ENCODE measurements at regions of chr3 and their contacts with region 1.

Region 1: GRCh38 chr3:39288300-39288808 is 8.5 kb upstream of the CX3CR1 start:
- DNase-seq: peak; percentile 89
- ATAC-seq: peak; percentile 93
- H3K4me3 ChIP-seq: no peak overlapping the region
- H3K27ac ChIP-seq: no peak overlapping the region
- H3K4me1 ChIP-seq: 0 out of 2 replicates have a peak, but pooled peaks cover 4% of the 10 kb centered on the region
- H3K27me3 ChIP-seq: no peaks in the 10 kb centered on the region
- CTCF ChIP-seq: peak; percentile 99

Region 2: GRCh38 chr3:39075910-39076309 is 212.4 kb before region 1 on chr3:
- CTCF ChIA-PET with region 1: no interaction called
- POLR2A ChIA-PET with region 1: no interaction called
- intact Hi-C with region 1: no loop called
- DNase-seq: no peak
- ATAC-seq: no peak
- H3K4me3 ChIP-seq: no peak overlapping the region
- H3K27ac ChIP-seq: no peak overlapping the region
- H3K4me1 ChIP-seq: no peaks in the 10 kb centered on the region
- H3K27me3 ChIP-seq: no peaks in the 10 kb centered on the region
- CTCF ChIP-seq: no peak

Region 3: GRCh38 chr3:39101022-39101689 is 187.2 kb before region 1 on chr3:
- CTCF ChIA-PET with region 1: interaction called, 6 read pairs
- POLR2A ChIA-PET with region 1: no interaction called
- intact Hi-C with region 1: loop called (anchors 1 kb)
- DNase-seq: peak; percentile 58
- ATAC-seq: peak; percentile 78
- H3K4me3 ChIP-seq: no peak overlapping the region
- H3K27ac ChIP-seq: no peak overlapping the region
- H3K4me1 ChIP-seq: peaks cover 12% of the 10 kb centered on the region
- H3K27me3 ChIP-seq: no peaks in the 10 kb centered on the region
- CTCF ChIP-seq: peak; percentile 93

Region 4: DNA sequence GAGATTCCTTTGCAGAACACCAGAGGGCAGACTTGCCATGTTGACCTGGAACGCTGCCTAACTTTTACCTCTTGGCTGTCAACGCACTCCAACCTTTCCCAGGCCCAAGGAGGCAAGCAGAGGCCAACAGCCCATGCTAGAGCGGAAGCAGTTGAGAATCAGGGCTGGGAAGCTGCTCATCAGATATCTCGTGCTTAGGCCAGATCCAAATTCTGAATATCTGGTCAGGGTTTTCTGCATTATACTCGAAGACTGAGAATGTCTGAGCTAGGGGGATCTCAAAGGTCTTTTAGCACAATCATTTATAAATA is 98.4 kb before region 1 on chr3:
- CTCF ChIA-PET with region 1: interaction called, 46 read pairs
- POLR2A ChIA-PET with region 1: no interaction called
- intact Hi-C with region 1: loop called (anchors 1 kb)
- DNase-seq: peak; percentile 79
- ATAC-seq: peak; percentile 82
- H3K4me3 ChIP-seq: no peak overlapping the region
- H3K27ac ChIP-seq: no peak overlapping the region
- H3K4me1 ChIP-seq: no peaks in the 10 kb centered on the region
- H3K27me3 ChIP-seq: no peaks in the 10 kb centered on the region
- CTCF ChIP-seq: peak; percentile 88

Region 5: GRCh38 chr3:39241561-39241960 is 46.8 kb before region 1 on chr3:
- CTCF ChIA-PET with region 1: no interaction called
- POLR2A ChIA-PET with region 1: no interaction called
- intact Hi-C with region 1: no loop called
- DNase-seq: no peak
- ATAC-seq: no peak
- H3K4me3 ChIP-seq: no peak overlapping the region
- H3K27ac ChIP-seq: no peak overlapping the region
- H3K4me1 ChIP-seq: no peaks in the 10 kb centered on the region
- H3K27me3 ChIP-seq: peaks cover 78% of the 10 kb centered on the region
- CTCF ChIP-seq: no peak

Region 6: GRCh38 chr3:39378088-39378487 is 89.7 kb after region 1 on chr3:
- CTCF ChIA-PET with region 1: interaction called, 8 read pairs
- POLR2A ChIA-PET with region 1: no interaction called
- intact Hi-C with region 1: loop called (anchors 1 kb)
- DNase-seq: peak; percentile 78
- ATAC-seq: peak; percentile 91
- H3K4me3 ChIP-seq: no peak overlapping the region
- H3K27ac ChIP-seq: no peak overlapping the region
- H3K4me1 ChIP-seq: peaks cover 7% of the 10 kb centered on the region
- H3K27me3 ChIP-seq: peaks cover 7% of the 10 kb centered on the region
- CTCF ChIP-seq: peak; percentile 91

Region 7: GRCh38 chr3:39398700-39399099 is 110.3 kb after region 1 on chr3:
- CTCF ChIA-PET with region 1: no interaction called
- POLR2A ChIA-PET with region 1: no interaction called
- intact Hi-C with region 1: no loop called
- DNase-seq: no peak
- ATAC-seq: peak; percentile 51
- H3K4me3 ChIP-seq: no peak overlapping the region
- H3K27ac ChIP-seq: no peak overlapping the region
- H3K4me1 ChIP-seq: no peaks in the 10 kb centered on the region
- H3K27me3 ChIP-seq: no peaks in the 10 kb centered on the region
- CTCF ChIP-seq: 0 out of 2 replicates have a peak, but pooled peaks have one; percentile 13

Region 8: GRCh38 chr3:39941931-39942330 is 653.6 kb after region 1 on chr3:
- CTCF ChIA-PET with region 1: no interaction called
- POLR2A ChIA-PET with region 1: no interaction called
- intact Hi-C with region 1: no loop called
- DNase-seq: no peak
- ATAC-seq: no peak
- H3K4me3 ChIP-seq: no peak overlapping the region
- H3K27ac ChIP-seq: no peak overlapping the region
- H3K4me1 ChIP-seq: no peaks in the 10 kb centered on the region
- H3K27me3 ChIP-seq: no peaks in the 10 kb centered on the region
- CTCF ChIP-seq: no peak

Measured in PC-3 (cell line).